ENCODE measurements at regions of chr3 and their contacts with region 1.

Region 1: GRCh38 chr3:59575113-59576001 is 525.5 kb upstream of the CFAP20DC start:
- DNase-seq: peak; percentile 75 to 94 (median 81)
- ATAC-seq: peak; percentile 78
- H3K4me3 ChIP-seq: no peak overlapping the region
- H3K4me3 Mint-ChIP-seq: no peak overlapping the region
- H3K27ac ChIP-seq: no peak overlapping the region
- H3K27ac Mint-ChIP-seq: no peak overlapping the region
- H3K4me1 ChIP-seq: peaks cover 5% of the 10 kb centered on the region
- H3K4me1 Mint-ChIP-seq: peaks cover 4% of the 10 kb centered on the region
- H3K27me3 ChIP-seq: no peaks in the 10 kb centered on the region
- H3K27me3 Mint-ChIP-seq: no peaks in the 10 kb centered on the region
- CTCF ChIP-seq: peak; percentile 95

Region 2: GRCh38 chr3:59212128-59212779 is 363.1 kb before region 1 on chr3:
- CTCF ChIA-PET with region 1: interaction called, 24 read pairs
- POLR2A ChIA-PET with region 1: no interaction called
- intact Hi-C with region 1: loop called (anchors 1 kb)
- DNase-seq: peak in 2 of 9 experiments; percentile 49 to 62
- ATAC-seq: no peak
- H3K4me3 ChIP-seq: no peak overlapping the region
- H3K4me3 Mint-ChIP-seq: no peak overlapping the region
- H3K27ac ChIP-seq: no peak overlapping the region
- H3K27ac Mint-ChIP-seq: no peak overlapping the region
- H3K4me1 ChIP-seq: no peaks in the 10 kb centered on the region
- H3K4me1 Mint-ChIP-seq: peaks cover 3% of the 10 kb centered on the region
- H3K27me3 ChIP-seq: no peaks in the 10 kb centered on the region
- H3K27me3 Mint-ChIP-seq: no peaks in the 10 kb centered on the region
- CTCF ChIP-seq: peak; percentile 79

Region 3: GRCh38 chr3:59809710-59810444 is 234.5 kb after region 1 on chr3:
- CTCF ChIA-PET with region 1: interaction called, 36 read pairs
- POLR2A ChIA-PET with region 1: no interaction called
- intact Hi-C with region 1: loop called in 1 of 2 experiments (anchors 5 kb)
- DNase-seq: peak in 2 of 9 experiments; percentile 23 to 40
- ATAC-seq: peak; percentile 36
- H3K4me3 ChIP-seq: no peak overlapping the region
- H3K4me3 Mint-ChIP-seq: no peak overlapping the region
- H3K27ac ChIP-seq: no peak overlapping the region
- H3K27ac Mint-ChIP-seq: no peak overlapping the region
- H3K4me1 ChIP-seq: no peaks in the 10 kb centered on the region
- H3K4me1 Mint-ChIP-seq: peaks cover 11% of the 10 kb centered on the region
- H3K27me3 ChIP-seq: no peaks in the 10 kb centered on the region
- H3K27me3 Mint-ChIP-seq: no peaks in the 10 kb centered on the region
- CTCF ChIP-seq: no peak

Region 4: GRCh38 chr3:60169755-60170154 is 594.4 kb after region 1 on chr3:
- CTCF ChIA-PET with region 1: no interaction called
- POLR2A ChIA-PET with region 1: no interaction called
- intact Hi-C with region 1: loop called (anchors 5 kb)
- DNase-seq: no peak
- ATAC-seq: no peak
- H3K4me3 ChIP-seq: no peak overlapping the region
- H3K4me3 Mint-ChIP-seq: no peak overlapping the region
- H3K27ac ChIP-seq: no peak overlapping the region
- H3K27ac Mint-ChIP-seq: no peak overlapping the region
- H3K4me1 ChIP-seq: no peaks in the 10 kb centered on the region
- H3K4me1 Mint-ChIP-seq: no peaks in the 10 kb centered on the region
- H3K27me3 ChIP-seq: no peaks in the 10 kb centered on the region
- H3K27me3 Mint-ChIP-seq: no peaks in the 10 kb centered on the region
- CTCF ChIP-seq: no peak

Region 5: DNA sequence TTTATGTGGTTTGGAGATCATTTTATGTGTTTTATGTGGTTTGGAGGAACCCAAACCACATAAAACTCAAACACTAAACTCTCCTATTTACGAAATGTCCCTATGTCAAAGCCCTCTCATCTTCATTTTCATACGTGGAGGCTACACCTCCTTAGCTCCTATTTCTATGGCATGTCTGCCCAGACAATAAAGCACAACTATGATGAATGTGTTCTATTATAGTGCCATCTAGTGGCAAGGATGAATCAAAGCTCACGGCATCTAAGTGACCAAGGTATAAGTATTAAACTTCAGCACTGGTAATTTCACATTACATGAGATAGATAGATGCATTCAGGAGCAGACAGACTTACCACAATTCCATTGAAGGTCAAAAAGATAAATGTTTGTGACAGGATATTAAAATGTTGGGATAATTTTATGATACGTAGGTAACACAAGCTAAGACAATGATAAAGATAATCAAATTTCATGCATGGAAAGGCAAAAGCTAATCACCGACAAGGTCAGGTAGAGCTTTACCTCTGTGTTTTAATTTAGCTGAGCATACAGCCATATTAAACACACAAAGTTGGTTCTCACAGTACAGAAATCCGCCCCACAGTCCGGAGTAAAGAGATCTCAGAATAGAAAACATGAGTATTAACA is 1806.5 kb after region 1 on chr3:
- CTCF ChIA-PET with region 1: interaction called, 4 read pairs
- POLR2A ChIA-PET with region 1: no interaction called
- intact Hi-C with region 1: loop called in 1 of 2 experiments (anchors 5 kb)
- DNase-seq: peak in 2 of 9 experiments; percentile 28 to 49
- ATAC-seq: no peak
- H3K4me3 ChIP-seq: no peak overlapping the region
- H3K4me3 Mint-ChIP-seq: no peak overlapping the region
- H3K27ac ChIP-seq: no peak overlapping the region
- H3K27ac Mint-ChIP-seq: no peak overlapping the region
- H3K4me1 ChIP-seq: no peaks in the 10 kb centered on the region
- H3K4me1 Mint-ChIP-seq: peaks cover 3% of the 10 kb centered on the region
- H3K27me3 ChIP-seq: peaks cover 0 to 2% of the 10 kb centered on the region in 2 experiments
- H3K27me3 Mint-ChIP-seq: peaks cover 13% of the 10 kb centered on the region
- CTCF ChIP-seq: peak; percentile 65

Measured in CD8-positive, alpha-beta T cell (primary cell).